PC-3 (cell line): ENCODE measurements at regions of chr14 and their contacts with region 1.

Region 1: GRCh38 chr14:64540208-64541157 is at the start of gene HSPA2:
- DNase-seq: peak; percentile 100
- ATAC-seq: peak; percentile 88
- H3K4me3 ChIP-seq: peak within 1 kb of the TSS; percentile 68
- H3K27ac ChIP-seq: peak within 1 kb of the TSS; percentile 73
- H3K4me1 ChIP-seq: peaks cover 27% of the 10 kb centered on the region
- H3K27me3 ChIP-seq: no peaks in the 10 kb centered on the region
- CTCF ChIP-seq: peak; percentile 80
- total RNA-seq, gene HSPA2: 15.7 and 16.5 TPM in 2 replicates

Region 2: GRCh38 chr14:64444984-64445845 is 95.3 kb before region 1 on chr14:
- CTCF ChIA-PET with region 1: no interaction called
- POLR2A ChIA-PET with region 1: no interaction called
- intact Hi-C with region 1: no loop called
- DNase-seq: no peak
- ATAC-seq: peak; percentile 38; the same call in 1 of the 2 replicates
- H3K4me3 ChIP-seq: no peak overlapping the region
- H3K27ac ChIP-seq: no peak overlapping the region
- H3K4me1 ChIP-seq: no peaks in the 10 kb centered on the region
- H3K27me3 ChIP-seq: no peaks in the 10 kb centered on the region
- CTCF ChIP-seq: no peak

Region 3: DNA sequence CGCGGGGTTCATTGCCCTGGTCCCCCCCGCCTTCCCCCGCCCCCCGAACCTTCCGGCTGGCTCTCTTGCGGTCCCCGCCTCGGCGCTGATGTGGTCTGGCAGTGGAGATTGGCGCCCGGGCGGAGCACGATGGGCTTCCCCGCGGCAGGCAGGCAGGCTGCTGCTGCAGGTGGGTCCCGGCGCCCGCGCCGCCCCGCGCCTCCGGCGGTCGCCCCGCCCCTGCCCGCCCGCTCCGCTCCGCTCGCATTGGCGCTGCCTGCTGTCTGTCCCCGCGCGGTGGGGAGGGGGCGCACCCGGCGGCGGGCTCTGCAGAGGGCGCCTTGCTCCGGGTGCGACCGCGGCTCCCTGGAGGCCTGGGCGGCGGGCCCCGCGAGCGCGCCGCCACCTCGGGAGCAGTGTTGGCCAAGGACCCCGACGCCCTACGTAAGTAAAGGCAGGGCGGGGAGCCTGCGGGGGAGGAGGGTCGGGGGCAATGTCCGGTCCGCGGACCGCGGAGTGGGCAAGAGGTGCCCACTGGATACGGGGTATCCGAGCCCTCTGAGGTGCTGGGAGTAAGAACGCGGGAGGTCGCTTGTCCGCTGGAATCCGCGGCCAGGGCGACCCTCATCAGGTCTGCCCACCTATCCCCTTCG is 75.2 kb before region 1 on chr14 and contains the start of gene AKAP5:
- CTCF ChIA-PET with region 1: no interaction called
- POLR2A ChIA-PET with region 1: no interaction called
- intact Hi-C with region 1: no loop called
- DNase-seq: peak; percentile 53
- ATAC-seq: peak; percentile 89
- H3K4me3 ChIP-seq: peak within 1 kb of the TSS; percentile 75
- H3K27ac ChIP-seq: no peak within 1 kb of the TSS
- H3K4me1 ChIP-seq: peaks cover 6% of the 10 kb centered on the region; the same call in 1 of the 2 replicates
- H3K27me3 ChIP-seq: no peaks in the 10 kb centered on the region
- CTCF ChIP-seq: no peak
- total RNA-seq, gene AKAP5: 0.58 and 0.86 TPM in 2 replicates

Region 4: GRCh38 chr14:64569184-64569631 is 28.7 kb after region 1 on chr14:
- CTCF ChIA-PET with region 1: no interaction called
- POLR2A ChIA-PET with region 1: no interaction called
- intact Hi-C with region 1: loop called (anchors 2 kb)
- DNase-seq: peak; percentile 63
- ATAC-seq: peak; percentile 91
- H3K4me3 ChIP-seq: no peak overlapping the region
- H3K27ac ChIP-seq: no peak overlapping the region
- H3K4me1 ChIP-seq: peaks cover 11% of the 10 kb centered on the region
- H3K27me3 ChIP-seq: no peaks in the 10 kb centered on the region
- CTCF ChIP-seq: no peak

Region 5: DNA sequence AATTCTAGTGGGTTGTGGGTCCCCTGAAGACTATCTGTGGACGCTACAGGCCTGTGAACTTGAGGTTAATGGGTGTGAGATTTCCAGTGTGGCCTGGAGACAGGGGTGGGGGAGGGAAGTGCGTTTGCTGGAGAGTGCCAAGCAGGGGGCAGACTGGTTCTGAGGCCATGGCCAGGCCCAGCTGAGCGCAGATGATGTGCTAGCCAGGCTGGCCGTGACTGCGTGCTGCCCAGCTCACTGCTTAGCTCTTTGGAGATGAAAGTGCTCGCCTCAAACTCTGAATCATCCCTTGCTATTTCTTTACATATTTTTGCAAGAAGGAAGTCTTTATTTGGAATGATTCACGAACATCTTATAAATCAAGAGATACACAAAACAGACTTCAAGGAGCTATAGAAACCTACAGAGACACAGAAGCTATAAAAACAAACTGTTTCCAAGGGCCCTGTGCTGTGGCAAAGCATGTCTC is 88.5 kb after region 1 on chr14:
- CTCF ChIA-PET with region 1: interaction called, 17 read pairs
- POLR2A ChIA-PET with region 1: interaction called, 21 read pairs
- intact Hi-C with region 1: loop called (anchors 1 kb)
- DNase-seq: peak; percentile 92
- ATAC-seq: peak; percentile 98
- H3K4me3 ChIP-seq: no peak overlapping the region
- H3K27ac ChIP-seq: peak overlapping the region; percentile 84
- H3K4me1 ChIP-seq: peaks cover 20% of the 10 kb centered on the region
- H3K27me3 ChIP-seq: no peaks in the 10 kb centered on the region
- CTCF ChIP-seq: peak; percentile 25; the same call in 1 of the 2 replicates

Region 6: GRCh38 chr14:64654246-64654900 is 113.9 kb after region 1 on chr14:
- CTCF ChIA-PET with region 1: interaction called, 6 read pairs
- POLR2A ChIA-PET with region 1: no interaction called
- intact Hi-C with region 1: loop called (anchors 1 kb)
- DNase-seq: peak; percentile 90
- ATAC-seq: peak; percentile 98
- H3K4me3 ChIP-seq: peak overlapping the region; percentile 6; the same call in 1 of the 2 replicates
- H3K27ac ChIP-seq: peak overlapping the region; percentile 68
- H3K4me1 ChIP-seq: peaks cover 17% of the 10 kb centered on the region
- H3K27me3 ChIP-seq: no peaks in the 10 kb centered on the region
- CTCF ChIP-seq: no peak

Region 7: DNA sequence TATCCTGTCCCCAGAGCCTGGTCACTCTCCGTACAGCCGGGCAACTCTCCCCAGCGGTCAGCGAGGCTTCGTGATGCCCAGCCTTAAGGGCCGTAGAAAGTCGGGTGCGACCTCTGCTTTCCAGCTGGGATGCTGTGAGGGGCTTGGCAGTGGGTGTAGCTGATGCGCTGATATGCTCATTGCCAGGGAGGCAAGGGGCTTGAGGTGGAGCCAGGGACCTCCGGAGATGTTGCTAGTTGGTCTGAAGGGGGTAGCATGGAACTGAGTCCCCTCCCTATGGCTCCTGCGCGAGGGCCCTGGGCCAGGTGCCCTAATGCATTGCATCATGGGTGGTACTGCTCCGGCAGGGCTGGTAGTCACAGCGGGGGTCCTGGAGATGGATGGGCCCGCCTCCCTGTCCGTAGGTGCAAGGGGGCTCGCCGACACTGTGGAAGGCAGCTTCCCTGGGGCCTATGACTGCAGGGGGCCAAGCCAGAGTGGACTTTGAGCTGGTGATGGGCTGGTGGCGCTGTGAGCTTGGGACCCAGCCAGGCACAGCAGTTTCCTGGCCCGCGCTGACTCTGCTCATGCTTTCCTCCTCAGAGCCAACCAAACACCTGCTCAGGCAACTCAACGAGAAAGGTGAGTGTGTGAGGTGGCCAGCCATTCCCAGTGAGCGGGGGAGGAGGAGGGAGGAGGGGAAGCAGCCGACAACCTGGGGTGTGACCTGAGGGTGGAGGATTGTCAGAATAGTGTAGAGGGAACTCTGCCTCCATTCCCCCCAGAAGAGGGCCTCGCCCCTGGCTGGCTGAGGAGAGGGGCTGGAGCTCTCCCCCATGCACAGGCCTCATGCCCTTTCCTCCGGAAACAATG is 196.0 kb after region 1 on chr14:
- CTCF ChIA-PET with region 1: no interaction called
- POLR2A ChIA-PET with region 1: no interaction called
- intact Hi-C with region 1: no loop called
- DNase-seq: no peak
- ATAC-seq: no peak
- H3K4me3 ChIP-seq: no peak overlapping the region
- H3K27ac ChIP-seq: no peak overlapping the region
- H3K4me1 ChIP-seq: no peaks in the 10 kb centered on the region
- H3K27me3 ChIP-seq: no peaks in the 10 kb centered on the region
- CTCF ChIP-seq: peak; percentile 26; the same call in 1 of the 2 replicates

Region 8: GRCh38 chr14:64899958-64900357 is 359.5 kb after region 1 on chr14:
- CTCF ChIA-PET with region 1: no interaction called
- POLR2A ChIA-PET with region 1: no interaction called
- intact Hi-C with region 1: no loop called
- DNase-seq: no peak
- ATAC-seq: no peak
- H3K4me3 ChIP-seq: no peak overlapping the region
- H3K27ac ChIP-seq: no peak overlapping the region
- H3K4me1 ChIP-seq: no peaks in the 10 kb centered on the region
- H3K27me3 ChIP-seq: 0 out of 2 replicates have a peak, but pooled peaks cover 11% of the 10 kb centered on the region
- CTCF ChIP-seq: no peak